SK-N-SH (cell line): ENCODE measurements at regions of chr2 and their contacts with region 1.

Region 1: DNA sequence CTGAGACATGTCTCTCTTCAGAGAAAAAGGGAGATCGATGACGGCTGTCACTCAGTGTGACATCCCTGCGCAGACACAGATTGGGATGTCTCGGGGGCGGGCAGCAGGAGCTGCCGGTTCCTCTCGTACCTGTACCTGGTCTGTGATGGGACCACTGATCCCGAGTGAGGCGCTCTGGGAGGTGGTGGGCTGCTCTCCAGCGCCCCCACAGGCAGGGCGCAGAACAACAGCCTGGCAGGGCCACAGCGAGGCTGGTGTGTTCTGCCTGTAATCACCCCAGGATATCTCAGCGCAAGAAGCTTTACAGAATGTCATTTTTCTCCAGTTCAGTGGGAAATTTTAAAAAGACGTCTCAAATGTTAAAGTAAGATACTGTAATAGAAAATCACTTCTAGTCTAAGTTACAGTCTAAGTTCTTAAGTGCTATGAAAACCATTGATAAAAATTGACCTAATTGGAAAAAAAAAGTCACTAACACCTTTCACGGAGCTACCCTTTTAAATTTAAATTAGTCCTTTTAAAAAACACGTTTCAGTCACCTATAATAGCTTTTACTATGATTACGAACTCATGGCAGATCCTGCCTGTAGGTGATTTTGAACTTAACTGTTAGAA is 189.8 kb downstream of the SNTG2 start:
- DNase-seq: peak; percentile 90
- H3K4me3 ChIP-seq: no peak overlapping the region
- H3K27ac ChIP-seq: no peak overlapping the region
- H3K4me1 ChIP-seq: no peaks in the 10 kb centered on the region; a peak in 1 of 4 replicates
- H3K27me3 ChIP-seq: no peaks in the 10 kb centered on the region
- CTCF ChIP-seq: peak; percentile 58
- EP300 ChIP-seq: no peak
- RAD21 ChIP-seq: peak; percentile 65

Region 2: GRCh38 chr2:960061-960736 is 180.3 kb before region 1 on chr2:
- CTCF ChIA-PET with region 1: interaction called, 32 read pairs
- POLR2A ChIA-PET with region 1: no interaction called
- DNase-seq: no peak
- H3K4me3 ChIP-seq: no peak overlapping the region
- H3K27ac ChIP-seq: no peak overlapping the region
- H3K4me1 ChIP-seq: peaks cover 0 to 2% of the 10 kb centered on the region in 2 experiments; a peak in 1 of 4 replicates
- H3K27me3 ChIP-seq: no peaks in the 10 kb centered on the region
- CTCF ChIP-seq: no peak
- EP300 ChIP-seq: no peak
- RAD21 ChIP-seq: no peak

Region 3: DNA sequence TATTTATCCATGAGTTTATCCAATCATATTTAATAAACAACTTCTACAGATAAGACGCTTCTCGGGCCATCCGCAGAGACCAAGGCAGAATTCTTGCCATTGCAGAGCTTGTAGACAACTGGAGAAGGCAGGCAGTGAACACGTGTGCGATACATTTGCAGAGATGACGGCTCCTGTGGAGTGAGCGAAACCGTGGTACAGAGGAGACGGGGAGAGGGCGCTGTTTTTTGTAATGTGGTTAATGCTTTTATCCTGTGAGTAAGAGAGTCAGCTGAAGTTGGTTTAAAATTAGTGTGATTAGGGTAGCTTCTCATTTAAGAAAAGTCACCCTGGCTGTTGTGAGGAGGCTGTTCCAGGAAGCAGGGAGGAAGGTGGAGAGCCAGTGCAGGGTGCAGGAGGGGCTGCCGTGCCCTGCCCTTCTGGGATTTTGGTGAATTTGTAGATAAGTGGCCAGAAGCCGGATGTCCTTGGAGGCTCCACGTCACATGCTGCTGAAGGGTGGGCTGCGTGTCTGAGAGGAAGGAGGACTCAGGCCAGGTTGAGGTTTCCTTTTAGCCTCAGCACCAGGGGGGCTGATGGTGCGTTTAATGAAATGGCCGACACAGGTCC is 38.4 kb before region 1 on chr2:
- CTCF ChIA-PET with region 1: interaction called, 12 read pairs
- POLR2A ChIA-PET with region 1: no interaction called
- DNase-seq: no peak
- H3K4me3 ChIP-seq: no peak overlapping the region
- H3K27ac ChIP-seq: no peak overlapping the region
- H3K4me1 ChIP-seq: peaks cover 0 to 3% of the 10 kb centered on the region in 2 experiments; a peak in 1 of 4 replicates
- H3K27me3 ChIP-seq: no peaks in the 10 kb centered on the region
- CTCF ChIP-seq: no peak
- EP300 ChIP-seq: no peak
- RAD21 ChIP-seq: no peak

Region 4: DNA sequence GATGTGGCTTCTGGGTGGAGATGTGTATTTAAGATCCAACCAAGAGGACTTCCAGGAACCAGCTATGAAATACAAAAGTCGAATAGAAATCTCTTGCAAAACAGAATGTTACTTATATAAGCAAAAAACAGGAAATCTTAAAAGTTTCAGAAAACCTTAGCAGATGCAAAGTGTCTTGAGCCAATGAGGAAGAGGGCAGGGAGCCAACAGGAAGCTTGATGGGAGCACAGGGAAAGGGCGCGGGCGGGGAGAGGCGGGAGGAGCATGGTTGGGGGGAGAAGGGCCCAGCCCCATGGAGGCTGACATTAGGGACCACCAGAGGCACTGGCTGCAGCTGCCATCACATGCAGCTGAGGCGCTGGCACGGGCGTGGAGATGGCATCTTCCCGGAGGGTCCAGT is 13.4 kb after region 1 on chr2:
- CTCF ChIA-PET with region 1: interaction called, 30 read pairs
- POLR2A ChIA-PET with region 1: no interaction called
- DNase-seq: no peak
- H3K4me3 ChIP-seq: no peak overlapping the region
- H3K27ac ChIP-seq: no peak overlapping the region
- H3K4me1 ChIP-seq: no peaks in the 10 kb centered on the region
- H3K27me3 ChIP-seq: no peaks in the 10 kb centered on the region
- CTCF ChIP-seq: no peak
- EP300 ChIP-seq: no peak
- RAD21 ChIP-seq: no peak

Region 5: DNA sequence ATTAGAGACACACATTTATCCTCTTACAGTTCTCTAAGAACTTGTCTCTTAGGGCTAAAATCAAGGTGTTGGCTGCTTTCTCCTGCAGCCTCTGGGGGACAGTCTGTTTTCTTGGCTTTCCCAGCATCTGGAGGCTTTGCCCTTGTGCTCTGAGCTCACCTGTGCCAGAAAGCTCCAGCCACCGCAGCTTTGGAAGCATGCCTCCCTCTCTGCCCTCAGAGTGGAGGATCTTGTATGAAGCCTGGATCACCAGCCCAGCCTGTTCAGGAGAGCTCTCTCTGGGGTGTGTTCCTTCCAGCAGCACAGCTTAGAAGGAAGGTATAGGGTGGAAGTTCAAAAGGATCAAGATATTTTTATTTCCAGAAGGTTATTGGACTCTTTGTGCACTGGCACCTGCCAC is 219.6 kb after region 1 on chr2:
- CTCF ChIA-PET with region 1: no interaction called
- POLR2A ChIA-PET with region 1: no interaction called
- DNase-seq: no peak
- H3K4me3 ChIP-seq: no peak overlapping the region
- H3K27ac ChIP-seq: no peak overlapping the region
- H3K4me1 ChIP-seq: no peaks in the 10 kb centered on the region
- H3K27me3 ChIP-seq: no peaks in the 10 kb centered on the region
- CTCF ChIP-seq: no peak
- EP300 ChIP-seq: no peak
- RAD21 ChIP-seq: no peak

Region 6: DNA sequence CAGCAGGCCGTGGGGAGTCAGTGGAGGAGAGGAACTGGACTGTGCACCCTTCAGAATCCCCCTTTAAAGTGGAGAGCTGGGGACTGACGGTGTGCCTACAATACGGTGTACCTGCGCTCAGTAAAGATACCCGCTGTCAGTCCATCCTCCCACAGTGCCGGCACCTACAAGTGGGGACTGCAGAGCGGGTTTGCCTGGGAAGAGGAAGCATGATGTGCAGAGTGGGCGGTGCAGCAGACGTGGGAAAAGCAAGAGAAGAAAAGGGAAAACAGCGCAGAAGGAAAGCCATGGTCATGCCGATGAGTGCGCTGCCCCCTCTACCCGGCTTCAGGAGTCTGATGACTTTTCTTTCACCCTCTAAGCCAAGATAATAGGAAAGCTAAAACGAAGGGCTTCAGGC is 420.8 kb after region 1 on chr2:
- CTCF ChIA-PET with region 1: no interaction called
- POLR2A ChIA-PET with region 1: no interaction called
- DNase-seq: no peak
- H3K4me3 ChIP-seq: no peak overlapping the region
- H3K27ac ChIP-seq: no peak overlapping the region
- H3K4me1 ChIP-seq: peaks cover 0 to 7% of the 10 kb centered on the region in 2 experiments; a peak in 1 of 4 replicates
- H3K27me3 ChIP-seq: no peaks in the 10 kb centered on the region
- CTCF ChIP-seq: no peak
- EP300 ChIP-seq: no peak
- RAD21 ChIP-seq: no peak